Heart left ventricle (tissue), 16 donors: ENCODE measurements at regions of chr13 and their contacts with region 1.

Region 1: GRCh38 chr13:26253787-26254582 is at the start of gene CDK8:
- DNase-seq: peak; percentile 93 to 96 (median 93)
- ATAC-seq: peak; percentile 92 to 98 (median 96)
- H3K4me3 ChIP-seq: peak within 1 kb of the TSS; percentile 70 to 97 (median 89)
- H3K27ac ChIP-seq: peak within 1 kb of the TSS; percentile 86 to 97 (median 93)
- H3K4me1 ChIP-seq: peaks cover 0 to 28% (median 17%) of the 10 kb centered on the region in 12 donors
- H3K27me3 ChIP-seq: peaks cover 0 to 3% (median 0%) of the 10 kb centered on the region in 9 donors
- CTCF ChIP-seq: no peak
- POLR2A ChIP-seq: peak in 1 of 2 donors; percentile 60
- total RNA-seq, gene CDK8: 8.4 to 11.6 (median 9.9) TPM

Region 2: DNA sequence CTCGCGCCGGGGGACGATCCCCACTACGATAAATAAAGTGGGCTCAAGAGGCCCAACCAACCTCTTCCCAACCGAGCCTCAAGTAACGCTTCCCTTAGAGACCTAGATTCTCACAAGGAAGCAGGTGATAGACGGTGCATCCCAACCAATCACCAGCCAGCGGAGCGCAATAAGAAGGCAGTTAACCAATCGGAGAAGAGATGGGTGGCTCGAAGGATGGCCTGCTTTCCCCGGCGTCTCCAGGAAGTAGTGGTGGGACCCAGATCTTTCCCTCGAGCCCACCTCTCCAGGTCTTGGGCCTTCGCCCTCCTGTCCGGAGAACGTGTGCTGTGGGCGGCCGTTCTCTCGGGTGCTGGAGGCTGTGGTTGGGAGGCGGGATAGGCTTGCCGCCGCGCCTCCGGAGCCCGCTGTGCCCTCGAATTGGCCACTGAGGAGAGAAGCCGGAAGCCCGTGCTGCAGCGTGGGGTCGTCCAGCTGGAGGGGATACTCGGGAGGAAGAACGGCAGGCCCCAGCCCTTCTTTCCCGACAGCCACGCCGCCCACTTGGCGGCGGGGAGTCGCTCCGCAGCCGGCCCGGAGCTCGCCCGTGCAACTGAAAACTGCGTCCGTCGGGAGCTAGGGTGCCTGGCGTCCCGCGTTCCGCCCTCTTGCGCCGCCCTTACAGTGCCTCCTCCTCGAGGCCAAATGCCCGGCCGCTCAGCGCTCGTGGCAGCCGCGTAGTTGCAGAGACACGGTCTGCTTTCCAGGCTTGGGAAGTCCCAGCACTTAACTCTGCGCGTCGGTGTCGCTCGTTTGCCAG is 32.1 kb before region 1 on chr13 and contains the start of gene RNF6:
- intact Hi-C with region 1: loop called in 3 of 10 experiments (anchors 2 to 5 kb)
- DNase-seq: peak; percentile 91 to 96 (median 96)
- ATAC-seq: peak; percentile 98 to 99 (median 99)
- H3K4me3 ChIP-seq: peak within 1 kb of the TSS; percentile 70 to 99 (median 90)
- H3K27ac ChIP-seq: peak within 1 kb of the TSS; percentile 90 to 99 (median 96)
- H3K4me1 ChIP-seq: peaks cover 4 to 33% (median 21%) of the 10 kb centered on the region in 12 donors
- H3K27me3 ChIP-seq: no peaks in the 10 kb centered on the region
- CTCF ChIP-seq: no peak
- POLR2A ChIP-seq: peak in 1 of 2 donors; percentile 39
- total RNA-seq, gene RNF6: 13.9 to 38.2 (median 23.8) TPM

Region 3: DNA sequence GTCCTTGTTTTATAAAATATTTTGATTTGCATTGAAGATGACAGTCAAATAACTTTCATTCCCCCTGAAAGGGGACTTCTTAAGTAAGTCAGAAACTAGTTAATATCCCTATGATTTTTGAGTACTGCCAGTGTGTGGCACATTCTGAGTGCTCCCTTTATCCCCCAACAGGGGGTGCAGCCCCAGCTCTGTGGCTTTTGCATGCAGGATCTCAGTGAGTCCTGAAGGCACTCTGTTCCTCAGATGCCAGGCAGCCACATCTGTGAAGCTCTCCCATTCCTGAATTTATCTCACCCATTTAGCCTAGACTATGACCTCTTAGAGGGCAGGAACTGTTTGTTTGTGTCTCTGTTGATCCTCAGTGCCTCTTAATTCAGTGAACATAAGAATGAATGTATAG is 123.1 kb after region 1 on chr13:
- intact Hi-C with region 1: loop called in 1 of 10 experiments (anchors 10 kb)
- DNase-seq: no peak
- ATAC-seq: peak in 1 of 4 donors; percentile 59
- H3K4me3 ChIP-seq: no peak overlapping the region
- H3K27ac ChIP-seq: no peak overlapping the region
- H3K4me1 ChIP-seq: peaks cover 0 to 13% (median 0%) of the 10 kb centered on the region in 12 donors
- H3K27me3 ChIP-seq: no peaks in the 10 kb centered on the region
- CTCF ChIP-seq: peak in 10 of 12 donors; percentile 6 to 43 (median 24)
- POLR2A ChIP-seq: no peak

Region 4: GRCh38 chr13:26476111-26476781 is 222.3 kb after region 1 on chr13:
- intact Hi-C with region 1: loop called in 3 of 10 experiments (anchors 5 to 10 kb)
- DNase-seq: peak in 4 of 5 donors; percentile 39 to 63 (median 57)
- ATAC-seq: peak; percentile 72 to 86 (median 84)
- H3K4me3 ChIP-seq: peak overlapping the region in 8 of 12 donors; percentile 9 to 49 (median 41)
- H3K27ac ChIP-seq: peak overlapping the region in 9 of 12 donors; percentile 56 to 81 (median 70)
- H3K4me1 ChIP-seq: peaks cover 0 to 29% (median 2%) of the 10 kb centered on the region in 12 donors
- H3K27me3 ChIP-seq: no peaks in the 10 kb centered on the region
- CTCF ChIP-seq: no peak
- POLR2A ChIP-seq: no peak

Region 5: GRCh38 chr13:26498656-26499591 is 244.9 kb after region 1 on chr13:
- intact Hi-C with region 1: loop called in 1 of 10 experiments (anchors 5 kb)
- DNase-seq: no peak
- ATAC-seq: peak in 3 of 4 donors; percentile 12 to 51 (median 27)
- H3K4me3 ChIP-seq: no peak overlapping the region
- H3K27ac ChIP-seq: peak overlapping the region in 2 of 12 donors; percentile 13 to 15
- H3K4me1 ChIP-seq: peaks cover 0 to 11% (median 0%) of the 10 kb centered on the region in 12 donors
- H3K27me3 ChIP-seq: peaks cover 0 to 5% (median 0%) of the 10 kb centered on the region in 9 donors
- CTCF ChIP-seq: peak in 1 of 12 donors; percentile 3
- POLR2A ChIP-seq: no peak